Natural killer cell (primary cell): ENCODE measurements at regions of chr5 and their contacts with region 1.

Region 1: GRCh38 chr5:151771259-151772028 is at the start of gene G3BP1:
- DNase-seq: peak; percentile 97 to 100
- ATAC-seq: peak; percentile 76 to 89 (median 77)
- H3K4me3 ChIP-seq: peak within 1 kb of the TSS; percentile 82
- H3K4me3 Mint-ChIP-seq: peak within 1 kb of the TSS; percentile 82
- H3K27ac ChIP-seq: peak within 1 kb of the TSS; percentile 94
- H3K27ac Mint-ChIP-seq: no peak within 1 kb of the TSS
- H3K4me1 ChIP-seq: peaks cover 27% of the 10 kb centered on the region
- H3K4me1 Mint-ChIP-seq: peaks cover 40 to 43% of the 10 kb centered on the region in 2 donors
- H3K27me3 ChIP-seq: no peaks in the 10 kb centered on the region
- H3K27me3 Mint-ChIP-seq: no peaks in the 10 kb centered on the region
- CTCF ChIP-seq: peak; percentile 52
- total RNA-seq, gene G3BP1: 94.9 to 127 (median 121) TPM

Region 2: GRCh38 chr5:150449517-150450339 is 1321.7 kb before region 1 on chr5 and contains the start of gene RPS14:
- intact Hi-C with region 1: loop called (anchors 10 kb)
- DNase-seq: peak; percentile 89 to 97
- ATAC-seq: peak; percentile 91 to 98 (median 93)
- H3K4me3 ChIP-seq: peak within 1 kb of the TSS; percentile 93
- H3K4me3 Mint-ChIP-seq: peak within 1 kb of the TSS; percentile 99
- H3K27ac ChIP-seq: peak within 1 kb of the TSS; percentile 99
- H3K27ac Mint-ChIP-seq: peak within 1 kb of the TSS; percentile 92 to 100
- H3K4me1 ChIP-seq: peaks cover 27% of the 10 kb centered on the region
- H3K4me1 Mint-ChIP-seq: peaks cover 32 to 38% of the 10 kb centered on the region in 2 donors
- H3K27me3 ChIP-seq: no peaks in the 10 kb centered on the region
- H3K27me3 Mint-ChIP-seq: peaks cover 0 to 2% of the 10 kb centered on the region in 2 donors
- CTCF ChIP-seq: peak; percentile 77
- total RNA-seq, gene RPS14: 1,744 to 2,278 (median 2,016) TPM

Region 3: GRCh38 chr5:151252762-151253604 is 518.5 kb before region 1 on chr5 and contains the start of gene GM2A:
- intact Hi-C with region 1: loop called (anchors 10 kb)
- DNase-seq: peak; percentile 93 to 99
- ATAC-seq: peak; percentile 95 to 99 (median 97)
- H3K4me3 ChIP-seq: peak within 1 kb of the TSS; percentile 59
- H3K4me3 Mint-ChIP-seq: peak within 1 kb of the TSS; percentile 92
- H3K27ac ChIP-seq: peak within 1 kb of the TSS; percentile 51
- H3K27ac Mint-ChIP-seq: peak within 1 kb of the TSS; percentile 85 to 86
- H3K4me1 ChIP-seq: peaks cover 29% of the 10 kb centered on the region
- H3K4me1 Mint-ChIP-seq: peaks cover 34 to 35% of the 10 kb centered on the region in 2 donors
- H3K27me3 ChIP-seq: no peaks in the 10 kb centered on the region
- H3K27me3 Mint-ChIP-seq: peaks cover 5 to 7% of the 10 kb centered on the region in 2 donors
- CTCF ChIP-seq: no peak
- total RNA-seq, gene GM2A: 9.6 to 15.9 (median 15.6) TPM

Region 4: GRCh38 chr5:151659001-151659754 is 112.3 kb before region 1 on chr5:
- intact Hi-C with region 1: loop called (anchors 2 kb)
- DNase-seq: peak; percentile 81 to 89
- ATAC-seq: peak; percentile 92 to 100 (median 100)
- H3K4me3 ChIP-seq: no peak overlapping the region
- H3K4me3 Mint-ChIP-seq: no peak overlapping the region
- H3K27ac ChIP-seq: no peak overlapping the region
- H3K27ac Mint-ChIP-seq: no peak overlapping the region
- H3K4me1 ChIP-seq: peaks cover 11% of the 10 kb centered on the region
- H3K4me1 Mint-ChIP-seq: peaks cover 11 to 16% of the 10 kb centered on the region in 2 donors
- H3K27me3 ChIP-seq: peaks cover 3% of the 10 kb centered on the region
- H3K27me3 Mint-ChIP-seq: peaks cover 0 to 6% of the 10 kb centered on the region in 2 donors
- CTCF ChIP-seq: peak; percentile 85

Region 5: DNA sequence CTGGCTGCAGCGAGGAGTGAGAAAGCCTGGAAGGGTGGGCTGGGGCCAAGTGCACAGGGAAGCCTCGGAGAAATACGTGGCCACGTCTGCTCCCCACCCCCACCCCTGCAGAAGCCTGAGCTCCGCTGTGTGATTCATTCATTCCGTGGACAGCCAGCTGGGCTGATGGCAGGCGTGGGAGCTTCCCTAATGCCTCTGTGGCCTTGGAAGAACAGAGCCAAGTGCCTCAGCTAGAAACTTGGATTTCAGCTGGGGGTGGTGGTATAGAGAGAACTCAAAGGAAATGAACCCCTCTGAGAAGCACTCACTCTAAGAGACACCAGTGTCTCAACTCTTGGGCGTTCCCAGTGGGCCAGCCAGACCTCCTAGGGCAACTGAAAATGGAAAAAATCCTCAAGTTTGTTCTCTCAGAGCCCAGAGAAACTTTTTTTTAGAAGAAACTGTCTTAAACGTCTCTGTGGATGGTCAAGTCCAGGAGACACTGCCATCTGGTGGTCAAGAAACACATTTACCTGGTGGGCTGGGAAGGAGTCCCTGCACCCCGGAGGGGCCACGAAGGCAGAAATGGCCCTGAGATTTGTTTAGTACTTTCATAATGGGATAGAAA is 31.0 kb before region 1 on chr5:
- intact Hi-C with region 1: loop called (anchors 1 kb)
- DNase-seq: peak; percentile 35 to 81
- ATAC-seq: peak; percentile 41 to 62 (median 48)
- H3K4me3 ChIP-seq: no peak overlapping the region
- H3K4me3 Mint-ChIP-seq: no peak overlapping the region
- H3K27ac ChIP-seq: no peak overlapping the region
- H3K27ac Mint-ChIP-seq: peak overlapping the region in 1 of 2 donors; percentile 9
- H3K4me1 ChIP-seq: peaks cover 19% of the 10 kb centered on the region
- H3K4me1 Mint-ChIP-seq: peaks cover 48 to 50% of the 10 kb centered on the region in 2 donors
- H3K27me3 ChIP-seq: no peaks in the 10 kb centered on the region
- H3K27me3 Mint-ChIP-seq: no peaks in the 10 kb centered on the region
- CTCF ChIP-seq: peak; percentile 88

Region 6: GRCh38 chr5:151758430-151759241 is 12.8 kb before region 1 on chr5 and contains the start of gene ATOX1:
- intact Hi-C with region 1: loop called (anchors 1 kb)
- DNase-seq: peak; percentile 92 to 95
- ATAC-seq: peak; percentile 98 to 100 (median 99)
- H3K4me3 ChIP-seq: peak within 1 kb of the TSS; percentile 70
- H3K4me3 Mint-ChIP-seq: peak within 1 kb of the TSS; percentile 93
- H3K27ac ChIP-seq: peak within 1 kb of the TSS; percentile 58
- H3K27ac Mint-ChIP-seq: peak within 1 kb of the TSS; percentile 89 to 97
- H3K4me1 ChIP-seq: peaks cover 30% of the 10 kb centered on the region
- H3K4me1 Mint-ChIP-seq: peaks cover 34 to 35% of the 10 kb centered on the region in 2 donors
- H3K27me3 ChIP-seq: no peaks in the 10 kb centered on the region
- H3K27me3 Mint-ChIP-seq: no peaks in the 10 kb centered on the region
- CTCF ChIP-seq: peak; percentile 5
- total RNA-seq, gene ATOX1: 41.5 to 46.4 (median 46.2) TPM